ENCODE measurements at regions of chr9 and their contacts with region 1.

Region 1: DNA sequence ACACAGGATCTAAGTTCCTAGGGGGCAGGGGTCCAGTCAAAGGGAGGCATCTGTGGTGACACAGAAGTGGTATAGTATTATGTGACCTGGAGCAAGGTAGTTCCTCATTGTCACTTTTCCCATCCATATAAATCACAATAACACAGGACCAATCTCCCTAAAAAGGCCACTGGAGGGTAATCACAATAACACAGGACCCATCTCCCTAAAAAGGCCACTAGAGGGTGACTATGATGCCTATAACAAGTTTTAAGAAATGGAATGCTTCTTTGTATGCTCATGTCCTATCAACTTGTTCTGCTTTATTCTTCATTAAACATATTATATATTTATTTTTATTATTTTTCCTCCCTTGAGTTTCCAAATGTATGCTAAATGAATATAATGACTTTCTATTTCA is 254.6 kb downstream of the ASTN2 start:
- DNase-seq: no peak
- H3K4me3 ChIP-seq: no peak overlapping the region
- H3K27ac ChIP-seq: no peak overlapping the region
- H3K4me1 ChIP-seq: no peaks in the 10 kb centered on the region
- H3K27me3 ChIP-seq: no peaks in the 10 kb centered on the region
- CTCF ChIP-seq: peak; percentile 36 to 51

Region 2: GRCh38 chr9:117411548-117411947 is 251.3 kb after region 1 on chr9:
- CTCF ChIA-PET with region 1: no interaction called
- dilution Hi-C with region 1: no loop called
- in situ Hi-C with region 1: no loop called
- intact Hi-C with region 1: loop called (anchors 1 kb)
- DNase-seq: peak; percentile 19
- H3K4me3 ChIP-seq: no peak overlapping the region
- H3K27ac ChIP-seq: no peak overlapping the region
- H3K4me1 ChIP-seq: peaks cover 6% of the 10 kb centered on the region
- H3K27me3 ChIP-seq: peaks cover 21% of the 10 kb centered on the region
- CTCF ChIP-seq: peak; percentile 79 to 84